Naive thymus-derived CD4-positive, alpha-beta T cell (primary cell): ENCODE measurements at regions of chr19 and their contacts with region 1.

Region 1: DNA sequence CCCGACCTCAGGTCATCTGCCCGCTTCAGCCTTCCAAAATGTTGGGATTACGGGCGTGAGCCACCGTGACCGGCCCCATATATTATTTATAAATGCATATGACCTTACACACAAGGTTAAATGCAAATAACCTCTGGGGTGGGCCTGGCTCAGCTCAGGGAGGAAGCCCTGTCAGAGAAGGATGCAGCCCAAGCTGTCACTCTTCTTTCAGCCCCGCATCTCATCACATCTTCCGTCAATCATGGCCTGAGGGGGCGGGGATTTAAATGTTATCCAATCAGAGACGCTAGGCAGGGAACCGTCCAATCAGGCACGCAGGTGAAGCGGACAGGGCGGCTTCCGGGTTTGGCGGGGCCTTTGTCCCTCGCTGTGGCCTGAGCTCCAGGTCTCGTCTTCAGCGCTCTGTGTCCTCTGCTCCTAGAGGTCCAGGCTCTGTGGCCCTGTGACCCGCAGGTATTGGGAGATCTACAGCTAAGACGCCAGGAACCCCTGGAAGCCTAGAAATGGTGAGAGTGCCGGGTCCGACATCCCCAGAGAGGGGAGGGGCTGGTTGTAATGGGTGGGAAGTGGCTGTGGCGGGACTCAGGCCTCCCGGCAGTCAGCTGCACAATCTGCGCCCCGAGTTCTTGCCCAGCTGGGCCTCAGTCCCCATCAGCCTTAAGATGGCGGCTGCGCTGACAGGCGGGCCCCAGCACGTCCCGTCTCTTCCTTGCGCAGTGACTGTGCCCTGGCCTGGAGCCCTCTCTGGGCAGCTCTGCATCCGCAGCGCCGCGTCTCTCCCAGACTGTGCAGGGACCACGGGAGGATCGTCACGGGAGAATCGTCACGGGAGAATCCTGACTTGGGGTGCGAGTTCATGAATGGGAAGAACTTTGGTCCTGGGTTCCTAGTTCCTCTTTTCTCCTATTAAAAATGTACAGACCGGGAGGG is at the start of gene ZNF430:
- DNase-seq: peak; percentile 75 to 95 (median 93)
- ATAC-seq: peak; percentile 98
- H3K4me3 ChIP-seq: peak within 1 kb of the TSS; percentile 95
- H3K4me3 Mint-ChIP-seq: peak within 1 kb of the TSS; percentile 99 to 100 (median 100)
- H3K27ac ChIP-seq: peak within 1 kb of the TSS; percentile 97
- H3K27ac Mint-ChIP-seq: peak within 1 kb of the TSS; percentile 99 to 100 (median 100)
- H3K4me1 ChIP-seq: peaks cover 14 to 20% of the 10 kb centered on the region in 2 donors
- H3K4me1 Mint-ChIP-seq: peaks cover 32 to 56% (median 52%) of the 10 kb centered on the region in 7 donors
- H3K27me3 ChIP-seq: no peaks in the 10 kb centered on the region
- H3K27me3 Mint-ChIP-seq: no peaks in the 10 kb centered on the region
- total RNA-seq, gene ZNF430: 26.4 to 52.0 (median 42.2) TPM

Region 2: GRCh38 chr19:20039203-20039723 is 981.3 kb before region 1 on chr19 and contains the start of gene ZNF682:
- CTCF ChIA-PET with region 1: no interaction called
- POLR2A ChIA-PET with region 1: interaction called, 4 read pairs
- intact Hi-C with region 1: loop called in 1 of 2 experiments (anchors 2 kb)
- DNase-seq: peak; percentile 83 to 96 (median 94)
- ATAC-seq: peak; percentile 100
- H3K4me3 ChIP-seq: peak within 1 kb of the TSS; percentile 90
- H3K4me3 Mint-ChIP-seq: peak within 1 kb of the TSS; percentile 92 to 99 (median 96)
- H3K27ac ChIP-seq: peak within 1 kb of the TSS; percentile 81
- H3K27ac Mint-ChIP-seq: peak within 1 kb of the TSS; percentile 86 to 98 (median 94)
- H3K4me1 ChIP-seq: no peaks in the 10 kb centered on the region
- H3K4me1 Mint-ChIP-seq: peaks cover 5 to 27% (median 25%) of the 10 kb centered on the region in 7 donors
- H3K27me3 ChIP-seq: no peaks in the 10 kb centered on the region
- H3K27me3 Mint-ChIP-seq: peaks cover 0 to 5% (median 0%) of the 10 kb centered on the region in 5 donors
- total RNA-seq, gene ZNF682: 5.3 to 13.0 (median 9.5) TPM

Region 3: GRCh38 chr19:20565321-20566018 is 455.1 kb before region 1 on chr19 and contains the start of gene ZNF737:
- CTCF ChIA-PET with region 1: no interaction called
- POLR2A ChIA-PET with region 1: no interaction called
- intact Hi-C with region 1: loop called in 1 of 2 experiments (anchors 1 kb)
- DNase-seq: peak; percentile 78 to 95 (median 89)
- ATAC-seq: peak; percentile 97
- H3K4me3 ChIP-seq: peak within 1 kb of the TSS; percentile 92
- H3K4me3 Mint-ChIP-seq: peak within 1 kb of the TSS; percentile 94 to 100 (median 99)
- H3K27ac ChIP-seq: peak within 1 kb of the TSS; percentile 82
- H3K27ac Mint-ChIP-seq: peak within 1 kb of the TSS; percentile 94 to 99 (median 97)
- H3K4me1 ChIP-seq: no peaks in the 10 kb centered on the region
- H3K4me1 Mint-ChIP-seq: peaks cover 0 to 39% (median 37%) of the 10 kb centered on the region in 7 donors
- H3K27me3 ChIP-seq: no peaks in the 10 kb centered on the region
- H3K27me3 Mint-ChIP-seq: no peaks in the 10 kb centered on the region
- total RNA-seq, gene ZNF737: 13.3 to 43.2 (median 14.9) TPM

Region 4: DNA sequence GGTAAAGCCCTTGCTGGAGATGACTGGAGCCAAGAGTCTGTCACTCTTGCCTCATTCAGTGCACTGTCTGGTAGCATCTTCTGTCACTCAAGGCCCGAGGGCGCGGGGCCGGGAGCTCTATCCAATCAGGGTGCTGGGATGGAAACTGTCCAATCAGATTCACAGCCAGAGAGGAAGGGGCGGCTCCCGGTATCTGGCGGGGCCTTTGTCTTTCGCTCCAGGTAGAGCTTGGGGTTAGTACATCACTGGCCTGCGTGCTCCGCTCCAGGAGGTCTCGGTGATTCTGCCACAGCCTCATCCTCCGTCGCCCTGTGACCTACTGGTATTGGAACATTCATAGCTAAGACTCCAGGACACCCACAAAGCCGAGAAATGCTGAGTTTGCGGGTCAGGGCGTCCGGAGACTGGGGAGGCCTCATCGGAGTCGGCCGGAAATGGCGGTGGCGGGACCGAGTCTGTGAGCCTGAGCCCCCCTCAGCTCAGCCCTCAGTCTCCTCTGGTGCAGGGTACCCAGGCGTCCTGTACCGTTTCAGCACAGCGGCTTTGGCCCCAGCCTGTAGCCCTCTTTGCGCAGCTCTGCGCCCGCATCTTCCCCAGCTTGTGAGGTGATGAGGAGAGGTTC is 20.7 kb before region 1 on chr19:
- CTCF ChIA-PET with region 1: no interaction called
- POLR2A ChIA-PET with region 1: interaction called, 14 read pairs
- intact Hi-C with region 1: loop called (anchors 1 kb)
- DNase-seq: peak; percentile 64 to 92 (median 86)
- ATAC-seq: peak; percentile 100
- H3K4me3 ChIP-seq: peak overlapping the region; percentile 67
- H3K4me3 Mint-ChIP-seq: peak overlapping the region; percentile 76 to 92 (median 85)
- H3K27ac ChIP-seq: no peak overlapping the region
- H3K27ac Mint-ChIP-seq: peak overlapping the region in 5 of 9 donors; percentile 36 to 87 (median 47)
- H3K4me1 ChIP-seq: no peaks in the 10 kb centered on the region
- H3K4me1 Mint-ChIP-seq: peaks cover 5 to 16% (median 7%) of the 10 kb centered on the region in 7 donors
- H3K27me3 ChIP-seq: no peaks in the 10 kb centered on the region
- H3K27me3 Mint-ChIP-seq: no peaks in the 10 kb centered on the region

Region 5: GRCh38 chr19:21396893-21397572 is 376.5 kb after region 1 on chr19 and contains the start of gene ZNF493:
- CTCF ChIA-PET with region 1: no interaction called
- POLR2A ChIA-PET with region 1: interaction called, 9 read pairs
- intact Hi-C with region 1: loop called (anchors 1 kb)
- DNase-seq: peak; percentile 76 to 95 (median 91)
- ATAC-seq: peak; percentile 100
- H3K4me3 ChIP-seq: peak within 1 kb of the TSS; percentile 80
- H3K4me3 Mint-ChIP-seq: peak within 1 kb of the TSS; percentile 90 to 99 (median 97)
- H3K27ac ChIP-seq: peak within 1 kb of the TSS; percentile 77
- H3K27ac Mint-ChIP-seq: peak within 1 kb of the TSS; percentile 68 to 97 (median 92)
- H3K4me1 ChIP-seq: peaks cover 6 to 11% of the 10 kb centered on the region in 2 donors
- H3K4me1 Mint-ChIP-seq: peaks cover 19 to 48% (median 32%) of the 10 kb centered on the region in 7 donors
- H3K27me3 ChIP-seq: no peaks in the 10 kb centered on the region
- H3K27me3 Mint-ChIP-seq: peaks cover 0 to 4% (median 0%) of the 10 kb centered on the region in 5 donors
- total RNA-seq, gene ZNF493: 19.7 to 78.3 (median 34.6) TPM

Region 6: GRCh38 chr19:22052644-22053013 is 1032.1 kb after region 1 on chr19:
- CTCF ChIA-PET with region 1: no interaction called
- POLR2A ChIA-PET with region 1: no interaction called
- intact Hi-C with region 1: loop called in 1 of 2 experiments (anchors 5 kb)
- DNase-seq: no peak
- ATAC-seq: peak; percentile 44
- H3K4me3 ChIP-seq: peak overlapping the region; percentile 76
- H3K4me3 Mint-ChIP-seq: peak overlapping the region; percentile 89 to 96 (median 94)
- H3K27ac ChIP-seq: peak overlapping the region; percentile 72
- H3K27ac Mint-ChIP-seq: peak overlapping the region; percentile 65 to 92 (median 88)
- H3K4me1 ChIP-seq: no peaks in the 10 kb centered on the region
- H3K4me1 Mint-ChIP-seq: peaks cover 0 to 14% (median 0%) of the 10 kb centered on the region in 7 donors
- H3K27me3 ChIP-seq: no peaks in the 10 kb centered on the region
- H3K27me3 Mint-ChIP-seq: no peaks in the 10 kb centered on the region